Heart left ventricle (tissue), 16 donors: ENCODE measurements at regions of chr14 and their contacts with region 1.

Region 1: GRCh38 chr14:93742761-93743160 is 45.5 kb downstream of the PRIMA1 start:
- DNase-seq: peak in 4 of 5 donors; percentile 46 to 86 (median 54)
- ATAC-seq: peak; percentile 83 to 93 (median 88)
- H3K4me3 ChIP-seq: no peak overlapping the region
- H3K27ac ChIP-seq: peak overlapping the region; percentile 6 to 86 (median 63)
- H3K4me1 ChIP-seq: peaks cover 0 to 30% (median 12%) of the 10 kb centered on the region in 12 donors
- H3K27me3 ChIP-seq: no peaks in the 10 kb centered on the region
- CTCF ChIP-seq: no peak
- POLR2A ChIP-seq: no peak

Region 2: DNA sequence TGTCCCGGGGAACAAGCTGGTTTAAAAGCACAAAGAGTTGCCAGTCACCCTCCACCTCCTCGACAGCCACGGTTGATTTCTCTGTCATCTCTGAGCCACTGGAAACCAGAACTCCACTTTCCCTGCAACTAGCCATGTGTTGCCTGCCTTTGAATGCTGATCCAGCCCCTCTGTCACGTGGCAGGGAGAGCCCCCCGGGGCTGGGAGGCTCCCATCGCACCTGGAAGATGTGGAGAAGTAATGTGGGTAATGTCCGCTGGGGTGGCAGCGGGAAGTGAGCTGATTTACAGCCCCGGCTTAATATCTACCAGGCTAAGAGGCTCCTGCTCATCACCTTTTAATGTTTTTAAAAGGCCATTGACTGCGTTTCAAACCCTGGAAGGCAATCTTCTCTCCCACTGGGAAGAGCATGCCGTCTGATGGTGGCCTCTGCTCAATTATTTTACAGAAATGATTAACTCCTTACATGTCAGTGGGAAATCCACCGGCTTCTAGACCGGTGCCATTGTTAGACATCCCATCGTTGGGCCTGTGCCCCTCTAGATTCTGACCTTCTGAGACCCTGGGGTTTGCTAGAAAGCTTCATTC is 38.1 kb after region 1 on chr14:
- intact Hi-C with region 1: loop called in 5 of 10 experiments (anchors 5 kb)
- DNase-seq: no peak
- ATAC-seq: no peak
- H3K4me3 ChIP-seq: no peak overlapping the region
- H3K27ac ChIP-seq: no peak overlapping the region
- H3K4me1 ChIP-seq: no peaks in the 10 kb centered on the region
- H3K27me3 ChIP-seq: no peaks in the 10 kb centered on the region
- CTCF ChIP-seq: no peak
- POLR2A ChIP-seq: no peak

Region 3: DNA sequence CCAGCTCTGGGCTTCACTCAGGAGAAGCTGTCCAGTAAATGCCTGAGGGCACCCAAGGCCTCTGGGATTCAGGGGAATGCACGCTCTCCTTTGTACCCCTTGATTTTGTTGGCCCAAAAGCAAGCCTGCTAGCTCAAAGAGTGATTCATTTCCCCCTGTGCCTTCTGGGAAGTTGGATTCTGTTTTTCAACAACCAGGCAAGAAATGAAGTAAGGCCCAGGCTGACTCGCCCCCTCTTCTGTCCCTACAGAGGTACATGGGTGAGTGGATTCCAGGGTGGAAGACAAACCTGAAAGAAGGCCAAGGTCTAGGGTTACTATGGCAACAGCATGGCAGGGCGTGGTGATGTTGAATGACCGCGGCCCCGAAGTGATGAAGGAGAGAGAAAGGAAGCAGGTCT is 829.2 kb after region 1 on chr14:
- intact Hi-C with region 1: no loop called
- DNase-seq: no peak
- ATAC-seq: peak in 1 of 4 donors; percentile 73
- H3K4me3 ChIP-seq: no peak overlapping the region
- H3K27ac ChIP-seq: peak overlapping the region in 7 of 12 donors; percentile 16 to 67 (median 35)
- H3K4me1 ChIP-seq: peaks cover 0 to 9% (median 0%) of the 10 kb centered on the region in 12 donors
- H3K27me3 ChIP-seq: peaks cover 0 to 10% (median 0%) of the 10 kb centered on the region in 9 donors
- CTCF ChIP-seq: no peak
- POLR2A ChIP-seq: no peak